Endothelial cell of umbilical vein (primary cell): ENCODE measurements at regions of chr15 and their contacts with region 1.

Region 1: DNA sequence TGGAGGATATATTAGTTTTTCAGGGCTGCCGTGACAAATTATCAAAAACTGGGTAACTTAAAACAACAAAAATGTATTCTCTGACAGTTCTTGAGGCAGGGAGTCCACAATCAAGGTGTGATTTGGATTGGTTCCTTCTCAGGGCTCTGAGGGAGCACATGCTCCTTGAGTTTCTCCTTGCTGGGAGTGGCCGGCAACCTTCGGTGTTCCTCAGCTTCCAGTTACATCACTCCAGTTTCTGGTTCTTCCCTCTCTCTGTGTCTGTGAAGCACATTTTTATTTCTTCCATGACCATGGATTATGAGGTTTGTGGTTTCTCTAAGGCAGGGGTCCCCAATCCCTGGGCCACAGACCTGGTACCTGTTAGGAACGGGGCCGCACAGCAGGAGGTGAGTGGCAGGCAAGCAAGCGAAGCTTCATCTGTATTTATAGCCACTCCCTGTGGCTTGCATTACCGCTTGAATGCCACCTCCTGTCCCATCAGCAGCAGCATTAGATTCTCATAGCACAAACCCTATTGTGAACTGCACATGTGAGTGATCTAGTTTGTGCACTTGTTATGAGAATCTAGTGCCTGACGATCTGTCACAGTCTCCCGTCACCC is 24.3 kb downstream of the LRRC28 start:
- DNase-seq: no peak
- H3K4me3 ChIP-seq: no peak overlapping the region
- H3K27ac ChIP-seq: no peak overlapping the region
- H3K4me1 ChIP-seq: no peaks in the 10 kb centered on the region
- H3K27me3 ChIP-seq: no peaks in the 10 kb centered on the region
- CTCF ChIP-seq: no peak
- POLR2A ChIP-seq: no peak

Region 2: DNA sequence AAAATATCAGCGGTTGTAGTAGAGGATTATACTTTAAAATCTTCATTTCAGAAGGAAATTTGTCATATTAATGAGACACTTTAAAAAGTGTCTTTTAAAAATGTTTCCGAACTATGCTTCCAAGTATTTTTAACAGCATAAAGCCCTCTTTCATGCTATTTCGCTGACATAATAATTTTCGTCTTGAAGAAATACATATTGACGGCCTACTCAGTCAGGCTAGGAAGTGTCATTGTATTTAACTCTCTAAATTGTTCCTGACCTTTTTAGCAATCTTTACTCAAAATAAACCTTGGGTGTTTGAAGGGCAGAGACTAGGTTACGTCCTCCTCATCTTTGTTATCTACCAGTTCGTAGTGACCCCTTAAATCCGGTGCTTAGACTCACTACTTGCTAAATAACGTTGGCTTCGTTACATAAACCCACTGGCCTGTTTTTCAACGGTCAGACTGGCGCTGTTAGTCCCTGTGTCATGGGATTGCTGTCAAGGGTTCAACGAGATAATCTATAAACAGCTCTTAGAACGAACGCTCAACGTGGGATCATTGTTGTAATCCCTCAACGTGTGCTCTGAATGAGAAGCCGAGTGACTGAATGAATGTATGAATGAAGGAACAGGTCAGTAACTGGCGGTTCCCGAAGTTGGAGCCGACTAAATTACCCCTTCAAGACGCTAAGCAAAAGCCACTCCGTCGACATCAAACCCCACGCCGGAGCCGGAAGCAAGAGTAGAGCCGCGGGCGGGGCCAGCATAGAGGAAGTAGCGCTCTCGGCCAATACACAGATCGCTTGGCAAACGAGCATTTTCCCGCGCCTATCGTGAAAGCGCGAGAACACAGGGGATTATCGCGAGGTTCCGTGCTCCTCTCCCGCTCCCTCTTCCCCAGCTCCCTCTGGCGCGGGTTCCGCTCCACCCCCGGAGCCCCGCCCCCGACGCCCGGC is 24.9 kb before region 1 on chr15:
- CTCF ChIA-PET with region 1: interaction called, 24 read pairs
- POLR2A ChIA-PET with region 1: no interaction called
- dilution Hi-C with region 1: no loop called
- intact Hi-C with region 1: no loop called
- DNase-seq: peak; percentile 100
- H3K4me3 ChIP-seq: peak overlapping the region; percentile 77 to 100 (median 80)
- H3K27ac ChIP-seq: peak overlapping the region; percentile 89
- H3K4me1 ChIP-seq: peaks cover 30% of the 10 kb centered on the region
- H3K27me3 ChIP-seq: no peaks in the 10 kb centered on the region
- CTCF ChIP-seq: no peak
- POLR2A ChIP-seq: peak; percentile 89

Region 3: DNA sequence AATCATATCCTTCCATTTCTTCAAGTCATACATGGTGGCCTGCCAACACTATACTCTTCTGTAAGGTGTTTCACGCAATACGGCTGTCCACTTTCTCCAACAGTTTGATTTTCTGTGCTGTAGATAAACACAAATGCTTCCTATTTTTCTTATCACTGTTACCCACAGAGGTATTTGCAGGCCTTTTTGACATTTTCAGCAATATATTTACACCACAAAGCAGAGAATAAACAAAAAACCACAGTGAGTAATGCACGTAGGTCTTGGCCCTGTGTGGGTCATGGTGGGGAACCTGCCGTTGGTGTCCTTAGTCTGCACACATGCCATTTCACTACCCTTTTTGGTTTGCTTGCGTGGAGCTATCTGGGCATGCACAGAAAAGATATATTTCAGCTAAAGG is 35.1 kb after region 1 on chr15:
- CTCF ChIA-PET with region 1: no interaction called
- POLR2A ChIA-PET with region 1: no interaction called
- dilution Hi-C with region 1: no loop called
- intact Hi-C with region 1: no loop called
- DNase-seq: no peak
- H3K4me3 ChIP-seq: no peak overlapping the region
- H3K27ac ChIP-seq: no peak overlapping the region
- H3K4me1 ChIP-seq: peaks cover 6% of the 10 kb centered on the region
- H3K27me3 ChIP-seq: no peaks in the 10 kb centered on the region
- CTCF ChIP-seq: no peak
- POLR2A ChIP-seq: no peak

Region 4: GRCh38 chr15:99682455-99682854 is 406.8 kb after region 1 on chr15:
- CTCF ChIA-PET with region 1: interaction called, 12 read pairs
- POLR2A ChIA-PET with region 1: no interaction called
- dilution Hi-C with region 1: no loop called
- intact Hi-C with region 1: no loop called
- DNase-seq: peak; percentile 94
- H3K4me3 ChIP-seq: peak overlapping the region in 1 of 3 experiments; percentile 41
- H3K27ac ChIP-seq: peak overlapping the region; percentile 95
- H3K4me1 ChIP-seq: peaks cover 23% of the 10 kb centered on the region
- H3K27me3 ChIP-seq: no peaks in the 10 kb centered on the region
- CTCF ChIP-seq: no peak
- POLR2A ChIP-seq: no peak

Region 5: GRCh38 chr15:99755692-99756409 is 480.2 kb after region 1 on chr15:
- CTCF ChIA-PET with region 1: interaction called, 155 read pairs
- POLR2A ChIA-PET with region 1: no interaction called
- dilution Hi-C with region 1: no loop called
- intact Hi-C with region 1: loop called (anchors 1 kb)
- DNase-seq: peak; percentile 73
- H3K4me3 ChIP-seq: no peak overlapping the region
- H3K27ac ChIP-seq: no peak overlapping the region
- H3K4me1 ChIP-seq: no peaks in the 10 kb centered on the region
- H3K27me3 ChIP-seq: no peaks in the 10 kb centered on the region
- CTCF ChIP-seq: peak; percentile 67 to 68
- POLR2A ChIP-seq: no peak

Region 6: GRCh38 chr15:100572362-100572983 is 1296.8 kb after region 1 on chr15:
- CTCF ChIA-PET with region 1: interaction called, 16 read pairs
- POLR2A ChIA-PET with region 1: no interaction called
- dilution Hi-C with region 1: no loop called
- intact Hi-C with region 1: no loop called
- DNase-seq: peak; percentile 16
- H3K4me3 ChIP-seq: no peak overlapping the region
- H3K27ac ChIP-seq: no peak overlapping the region
- H3K4me1 ChIP-seq: no peaks in the 10 kb centered on the region
- H3K27me3 ChIP-seq: no peaks in the 10 kb centered on the region
- CTCF ChIP-seq: peak; percentile 4 to 26
- POLR2A ChIP-seq: no peak